Sciatic nerve (tissue), 2 donors: ENCODE measurements at regions of chr7 and their contacts with region 1.

Region 1: GRCh38 chr7:38561166-38561565 is 70.0 kb downstream of the AMPH start:
- DNase-seq: no peak
- ATAC-seq: no peak

Region 2: GRCh38 chr7:38518541-38518940 is 42.6 kb before region 1 on chr7:
- intact Hi-C with region 1: loop called (anchors 1 kb)
- DNase-seq: no peak
- ATAC-seq: no peak